CD4-positive, alpha-beta memory T cell (primary cell): ENCODE measurements at regions of chrX and their contacts with region 1.

Region 1: DNA sequence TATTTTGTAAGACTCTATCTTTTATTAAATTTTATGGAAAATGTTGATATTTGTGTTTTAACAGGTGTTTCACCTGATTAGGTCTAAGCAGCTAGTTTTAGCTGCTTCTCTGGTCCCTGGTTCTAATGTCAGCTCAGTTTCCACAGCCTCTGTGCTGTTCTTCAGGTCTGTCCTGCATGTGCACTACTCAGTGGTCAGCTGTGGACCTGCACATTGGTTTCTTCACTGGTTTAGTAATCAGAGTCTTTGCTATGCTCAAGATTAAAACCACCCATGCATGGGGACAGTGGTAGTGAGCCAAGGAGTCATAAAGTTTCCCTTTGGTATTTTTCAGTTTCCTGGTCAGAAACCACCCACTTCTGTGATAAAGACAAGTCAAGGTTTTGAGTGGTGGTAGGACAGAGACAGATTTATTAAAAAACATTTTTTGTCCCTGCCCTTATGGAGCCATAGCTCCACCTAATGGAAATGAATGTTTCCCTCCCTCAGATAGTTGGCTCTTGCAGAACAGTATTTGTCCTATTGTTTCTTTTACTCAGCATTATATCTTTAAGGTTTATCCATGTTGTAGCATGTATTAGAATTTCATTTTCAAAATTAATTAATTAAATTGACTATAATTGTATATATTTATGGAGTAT is 36.8 kb upstream of the VBP1 start:
- DNase-seq: no peak
- H3K4me3 ChIP-seq: no peak overlapping the region
- H3K4me3 Mint-ChIP-seq: no peak overlapping the region
- H3K27ac ChIP-seq: no peak overlapping the region
- H3K27ac Mint-ChIP-seq: no peak overlapping the region
- H3K4me1 ChIP-seq: no peaks in the 10 kb centered on the region
- H3K4me1 Mint-ChIP-seq: no peaks in the 10 kb centered on the region
- H3K27me3 ChIP-seq: no peaks in the 10 kb centered on the region
- H3K27me3 Mint-ChIP-seq: no peaks in the 10 kb centered on the region

Region 2: GRCh38 chrX:155094468-155095061 is 84.9 kb before region 1 on chrX:
- CTCF ChIA-PET with region 1: interaction called, 4 read pairs
- POLR2A ChIA-PET with region 1: no interaction called
- intact Hi-C with region 1: loop called (anchors 1 kb)
- DNase-seq: peak; percentile 41 to 47 (median 45)
- H3K4me3 ChIP-seq: no peak overlapping the region
- H3K4me3 Mint-ChIP-seq: no peak overlapping the region
- H3K27ac ChIP-seq: no peak overlapping the region
- H3K27ac Mint-ChIP-seq: no peak overlapping the region
- H3K4me1 ChIP-seq: no peaks in the 10 kb centered on the region
- H3K4me1 Mint-ChIP-seq: peaks cover 0 to 6% (median 4%) of the 10 kb centered on the region in 4 donors
- H3K27me3 ChIP-seq: no peaks in the 10 kb centered on the region
- H3K27me3 Mint-ChIP-seq: no peaks in the 10 kb centered on the region